ENCODE measurements at regions of chr2 and their contacts with region 1.

Region 1: GRCh38 chr2:110853507-110853906 is 121.1 kb downstream of the ACOXL start:
- DNase-seq: peak; percentile 44
- H3K4me3 Mint-ChIP-seq: peak overlapping the region; percentile 35
- H3K27ac Mint-ChIP-seq: no peak overlapping the region
- H3K4me1 Mint-ChIP-seq: peaks cover 88% of the 10 kb centered on the region
- H3K27me3 Mint-ChIP-seq: peaks cover 23% of the 10 kb centered on the region

Region 2: DNA sequence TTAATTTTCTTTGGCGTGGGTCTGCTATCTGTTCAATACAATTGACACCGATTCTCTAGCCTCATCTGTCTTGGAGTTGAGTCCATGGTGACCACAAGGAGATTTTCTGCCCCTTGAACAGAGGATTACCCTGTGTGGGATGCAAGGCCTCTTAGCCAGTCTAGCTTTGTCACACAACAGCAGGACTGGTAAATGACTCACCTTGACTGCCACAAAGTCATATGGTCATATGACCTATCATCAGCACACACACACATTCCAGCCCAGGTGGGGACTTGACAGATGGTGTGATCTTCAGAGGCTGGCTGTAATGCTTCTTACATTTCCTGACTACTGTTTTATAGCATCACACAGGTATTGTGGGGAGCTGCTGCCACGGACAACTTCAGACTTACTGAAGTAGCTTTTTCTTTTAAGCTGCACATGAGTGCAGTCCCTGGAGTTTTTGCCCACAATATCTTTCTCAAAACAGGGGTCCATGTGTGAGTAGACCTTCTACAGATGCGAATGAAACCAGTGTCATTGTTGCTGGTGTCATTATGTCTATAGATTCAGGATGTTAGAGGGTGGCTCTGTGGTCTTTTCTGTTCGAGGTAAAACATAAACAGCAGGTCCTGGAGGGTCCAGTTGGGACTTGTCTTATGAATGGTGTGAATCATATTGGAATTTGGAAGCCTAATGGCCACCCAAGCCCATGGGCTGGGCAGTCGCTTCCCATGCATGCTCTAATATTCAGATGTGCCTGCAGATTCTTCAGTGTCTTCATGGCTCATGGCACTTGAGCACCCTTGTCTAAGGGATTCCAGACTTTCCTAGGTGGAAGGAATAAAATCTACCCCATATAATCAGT is 139.8 kb before region 1 on chr2:
- intact Hi-C with region 1: no loop called
- DNase-seq: no peak
- H3K4me3 Mint-ChIP-seq: no peak overlapping the region
- H3K27ac Mint-ChIP-seq: no peak overlapping the region
- H3K4me1 Mint-ChIP-seq: peaks cover 10% of the 10 kb centered on the region
- H3K27me3 Mint-ChIP-seq: peaks cover 71% of the 10 kb centered on the region

Region 3: DNA sequence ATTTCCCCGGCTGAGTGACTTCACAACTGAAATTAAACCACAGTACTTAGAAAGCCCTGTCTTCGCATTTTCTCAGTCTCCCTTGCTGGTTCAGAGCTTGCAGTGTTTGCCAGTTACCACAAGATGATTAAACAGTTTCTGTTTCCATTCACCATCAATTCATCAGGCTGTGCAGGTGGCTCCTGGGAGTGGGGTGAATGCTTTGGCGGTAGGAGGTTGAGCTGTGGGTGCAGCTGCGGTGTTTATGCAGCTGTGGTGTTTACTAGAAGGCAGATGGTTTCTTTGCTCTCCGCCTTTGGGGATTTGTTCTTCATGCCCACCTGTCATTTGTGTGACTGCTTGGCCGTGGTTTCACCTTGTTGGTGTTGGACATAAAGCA is 105.0 kb before region 1 on chr2:
- intact Hi-C with region 1: loop called (anchors 2 kb)
- DNase-seq: peak; percentile 78
- H3K4me3 Mint-ChIP-seq: peak overlapping the region; percentile 50
- H3K27ac Mint-ChIP-seq: peak overlapping the region; percentile 35
- H3K4me1 Mint-ChIP-seq: peaks cover 47% of the 10 kb centered on the region
- H3K27me3 Mint-ChIP-seq: peaks cover 19% of the 10 kb centered on the region

Region 4: GRCh38 chr2:110829413-110830146 is 23.9 kb before region 1 on chr2:
- intact Hi-C with region 1: loop called (anchors 2 kb)
- DNase-seq: no peak
- H3K4me3 Mint-ChIP-seq: no peak overlapping the region
- H3K27ac Mint-ChIP-seq: no peak overlapping the region
- H3K4me1 Mint-ChIP-seq: peaks cover 9% of the 10 kb centered on the region
- H3K27me3 Mint-ChIP-seq: peaks cover 59% of the 10 kb centered on the region

Region 5: GRCh38 chr2:110881908-110882307 is 28.4 kb after region 1 on chr2:
- intact Hi-C with region 1: loop called (anchors 2 kb)
- DNase-seq: no peak
- H3K4me3 Mint-ChIP-seq: no peak overlapping the region
- H3K27ac Mint-ChIP-seq: peak overlapping the region; percentile 19
- H3K4me1 Mint-ChIP-seq: peaks cover 22% of the 10 kb centered on the region
- H3K27me3 Mint-ChIP-seq: peaks cover 45% of the 10 kb centered on the region

Region 6: DNA sequence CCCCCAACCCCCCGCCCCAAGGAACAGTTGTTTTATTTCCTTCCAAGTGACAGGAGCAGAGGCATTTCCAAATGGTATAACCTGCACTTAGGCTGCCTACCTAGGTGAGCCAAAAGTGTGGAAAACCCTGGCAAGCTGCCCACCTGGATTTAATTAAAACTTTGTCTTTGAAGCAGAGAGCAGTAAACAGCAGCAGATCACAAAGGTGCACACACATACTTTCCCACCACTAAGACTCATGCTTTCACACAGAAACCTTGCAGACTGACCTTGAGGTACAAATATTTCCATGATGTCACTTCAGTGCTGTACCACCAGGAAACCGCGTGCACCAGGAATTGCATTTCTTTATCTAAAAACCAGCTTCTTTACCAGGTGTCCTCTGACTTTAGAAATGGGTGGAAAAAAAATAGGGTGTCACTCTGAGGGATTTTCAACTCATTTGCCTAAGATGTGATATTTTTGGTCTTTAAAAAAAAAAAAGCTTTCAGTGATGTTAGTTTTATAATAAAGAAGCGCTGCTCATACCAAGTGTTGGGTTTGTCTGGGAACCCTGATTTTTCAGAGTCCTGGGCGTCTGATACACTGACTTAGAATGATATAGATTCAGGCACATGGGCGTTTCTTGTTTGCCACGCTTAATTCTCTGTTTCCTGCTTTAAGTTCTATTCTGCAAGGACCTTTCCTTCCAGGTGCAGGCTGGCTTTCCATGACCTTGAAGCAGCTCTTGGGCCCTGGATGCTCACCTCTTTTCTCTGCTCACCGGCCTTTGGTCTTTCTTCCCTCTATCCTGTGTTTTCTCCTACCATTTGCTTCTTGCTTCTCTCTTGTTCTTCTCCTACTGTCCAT is 196.5 kb after region 1 on chr2:
- intact Hi-C with region 1: loop called (anchors 1 kb)
- DNase-seq: no peak
- H3K4me3 Mint-ChIP-seq: peak overlapping the region; percentile 24
- H3K27ac Mint-ChIP-seq: peak overlapping the region; percentile 82
- H3K4me1 Mint-ChIP-seq: peaks cover 48% of the 10 kb centered on the region
- H3K27me3 Mint-ChIP-seq: peaks cover 9% of the 10 kb centered on the region

Region 7: DNA sequence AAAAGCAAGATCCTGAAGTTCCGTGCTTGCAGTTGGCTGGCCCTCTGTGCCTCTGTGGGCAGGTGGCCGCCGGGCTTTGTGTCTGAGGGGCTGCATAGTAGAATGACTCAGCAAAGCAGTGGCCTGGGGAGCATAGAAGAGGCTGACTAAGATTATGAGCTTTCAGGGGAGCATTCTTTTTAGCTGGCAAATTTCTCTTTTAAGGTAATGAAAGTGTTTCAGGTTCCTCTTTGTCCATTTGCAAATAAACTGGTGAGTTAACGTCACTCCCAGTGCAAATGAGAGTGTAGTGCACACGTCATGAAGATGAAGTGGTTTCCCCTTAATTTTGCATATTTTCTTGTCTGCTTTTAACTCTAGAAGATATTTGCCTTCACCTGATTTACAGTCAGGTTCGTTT is 365.8 kb after region 1 on chr2:
- intact Hi-C with region 1: no loop called
- DNase-seq: no peak
- H3K4me3 Mint-ChIP-seq: no peak overlapping the region
- H3K27ac Mint-ChIP-seq: no peak overlapping the region
- H3K4me1 Mint-ChIP-seq: peaks cover 16% of the 10 kb centered on the region
- H3K27me3 Mint-ChIP-seq: peaks cover 4% of the 10 kb centered on the region

Measured in activated T-helper 1 cell treated with anti-CD3 and anti-CD28 coated beads, Interleukin-12 subunit alpha, Interleukin-12 subunit beta, Interleukin-2, Interleukin-4 antibody, amounts not matched to agents 30 ng/mL and 10 ng/mL and 1 ng/mL, durations not matched to agents 14 hours and 24 hours and 36 hours (primary cell).